Lower lobe of right lung (tissue), 2 donors: ENCODE measurements at regions of chr3 and their contacts with region 1.

Region 1: DNA sequence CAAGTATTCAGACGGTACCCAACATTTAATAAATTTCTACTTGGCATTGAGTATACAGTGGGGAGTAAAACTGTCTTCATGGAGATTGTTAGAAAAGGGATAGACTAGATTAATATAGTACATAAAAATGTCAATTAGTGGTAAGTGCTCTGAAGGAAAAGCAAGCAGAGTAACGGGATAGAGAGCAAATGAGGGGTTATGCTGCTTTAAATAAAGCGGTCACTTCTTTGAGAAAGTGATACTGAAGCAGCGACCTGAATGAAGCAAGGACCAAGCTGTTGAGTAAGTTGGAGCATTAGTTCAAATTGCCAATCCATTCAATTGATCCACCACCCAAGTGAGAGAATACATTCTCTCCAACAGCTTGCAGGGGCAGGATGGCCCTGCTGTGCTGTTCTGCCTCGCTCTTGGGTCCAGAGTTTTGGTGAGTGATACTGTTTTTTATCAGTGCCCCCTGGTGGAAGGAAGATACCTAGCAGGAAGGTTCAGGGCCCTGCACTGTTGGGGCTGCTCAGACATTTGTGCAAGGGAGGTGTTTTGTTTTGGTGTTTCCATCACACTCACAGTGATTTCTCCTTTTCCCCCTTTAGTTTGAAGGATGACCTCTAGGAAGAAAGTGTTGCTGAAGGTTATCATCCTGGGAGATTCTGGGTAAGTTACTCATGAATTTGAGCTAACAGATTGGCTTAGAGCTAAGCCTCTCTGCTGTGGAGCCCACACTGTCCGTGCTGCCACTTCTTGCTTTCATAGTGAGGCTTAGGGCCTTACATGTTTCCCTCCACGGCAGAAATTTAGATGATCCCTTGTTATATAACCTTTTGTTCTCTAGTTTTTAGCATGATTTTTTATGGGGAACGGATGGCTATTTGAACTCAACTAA is 69.0 kb downstream of the RAB7A start:
- DNase-seq: no peak
- ATAC-seq: peak; percentile 94
- H3K4me3 ChIP-seq: no peak overlapping the region
- H3K27ac ChIP-seq: no peak overlapping the region
- H3K4me1 ChIP-seq: peaks cover 27% of the 10 kb centered on the region
- H3K27me3 ChIP-seq: no peaks in the 10 kb centered on the region
- CTCF ChIP-seq: peak; percentile 88

Region 2: DNA sequence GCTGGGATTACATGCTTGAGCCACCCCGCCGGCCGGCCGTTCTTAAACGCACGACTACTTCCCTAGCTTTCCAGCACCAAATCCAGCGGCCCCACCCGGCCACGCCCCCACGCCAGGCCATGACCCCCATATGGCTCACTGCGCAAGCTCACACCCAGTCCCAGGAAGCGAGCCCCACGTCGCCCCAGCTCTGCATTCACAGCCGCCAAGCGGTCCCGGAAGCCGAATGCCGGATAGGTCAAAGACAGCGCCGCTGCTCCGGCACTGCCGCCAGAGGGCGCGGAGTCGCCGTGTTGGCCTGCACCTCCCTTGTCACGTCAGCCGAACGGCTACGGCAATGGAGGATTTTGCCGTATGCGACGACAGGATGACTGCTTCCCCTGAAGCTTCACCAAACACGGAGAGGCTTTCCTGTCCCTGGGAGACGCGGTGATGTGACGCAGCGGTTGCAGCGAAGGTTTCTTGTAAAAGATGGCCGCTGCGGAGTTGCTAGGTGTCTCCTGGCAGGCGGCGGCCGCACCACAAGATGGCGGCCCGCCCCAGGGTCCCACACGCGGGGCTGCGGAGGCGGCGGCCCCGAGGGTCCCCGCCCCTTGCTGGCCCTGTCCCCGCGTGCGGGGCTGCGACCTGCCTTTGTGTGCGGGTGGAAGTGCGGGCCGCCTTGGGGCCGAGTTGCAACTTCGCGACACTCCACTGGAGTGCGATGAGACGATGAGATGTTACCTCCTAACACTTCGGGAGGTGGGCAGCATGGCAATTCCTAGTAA is 114.2 kb before region 1 on chr3:
- intact Hi-C with region 1: loop called (anchors 5 kb)
- DNase-seq: peak; percentile 100
- ATAC-seq: peak; percentile 99
- H3K4me3 ChIP-seq: peak overlapping the region; percentile 65
- H3K27ac ChIP-seq: peak overlapping the region; percentile 95
- H3K4me1 ChIP-seq: peaks cover 25% of the 10 kb centered on the region
- H3K27me3 ChIP-seq: no peaks in the 10 kb centered on the region
- CTCF ChIP-seq: peak; percentile 95